GM10248 (cell line): ENCODE measurements at regions of chr6 and their contacts with region 1.

Region 1: GRCh38 chr6:152954443-152954842 is 28.4 kb downstream of the FBXO5 start:
- DNase-seq: peak; percentile 15
- CTCF ChIP-seq: peak; percentile 24

Region 2: DNA sequence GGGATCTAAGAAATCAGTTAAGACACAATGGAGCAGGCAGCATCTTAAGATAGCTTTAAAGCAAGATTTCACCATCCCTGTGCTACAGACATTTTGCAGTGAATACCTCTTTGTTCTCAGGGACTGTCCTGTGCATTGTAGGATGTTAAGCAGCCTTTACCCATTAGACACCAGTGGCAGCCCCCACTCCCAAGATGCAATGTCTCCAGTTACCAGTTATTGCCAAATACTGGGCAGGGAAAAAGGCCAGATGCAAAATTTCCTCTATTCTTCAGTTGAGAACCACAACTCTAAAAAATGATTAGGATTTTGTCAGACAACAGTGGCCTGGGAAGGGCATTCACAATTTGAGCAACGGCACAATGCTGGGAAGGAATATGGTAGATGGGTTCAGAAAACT is 22.3 kb after region 1 on chr6:
- CTCF ChIA-PET with region 1: interaction called, 13 read pairs
- POLR2A ChIA-PET with region 1: no interaction called
- DNase-seq: no peak
- CTCF ChIP-seq: no peak

Region 3: DNA sequence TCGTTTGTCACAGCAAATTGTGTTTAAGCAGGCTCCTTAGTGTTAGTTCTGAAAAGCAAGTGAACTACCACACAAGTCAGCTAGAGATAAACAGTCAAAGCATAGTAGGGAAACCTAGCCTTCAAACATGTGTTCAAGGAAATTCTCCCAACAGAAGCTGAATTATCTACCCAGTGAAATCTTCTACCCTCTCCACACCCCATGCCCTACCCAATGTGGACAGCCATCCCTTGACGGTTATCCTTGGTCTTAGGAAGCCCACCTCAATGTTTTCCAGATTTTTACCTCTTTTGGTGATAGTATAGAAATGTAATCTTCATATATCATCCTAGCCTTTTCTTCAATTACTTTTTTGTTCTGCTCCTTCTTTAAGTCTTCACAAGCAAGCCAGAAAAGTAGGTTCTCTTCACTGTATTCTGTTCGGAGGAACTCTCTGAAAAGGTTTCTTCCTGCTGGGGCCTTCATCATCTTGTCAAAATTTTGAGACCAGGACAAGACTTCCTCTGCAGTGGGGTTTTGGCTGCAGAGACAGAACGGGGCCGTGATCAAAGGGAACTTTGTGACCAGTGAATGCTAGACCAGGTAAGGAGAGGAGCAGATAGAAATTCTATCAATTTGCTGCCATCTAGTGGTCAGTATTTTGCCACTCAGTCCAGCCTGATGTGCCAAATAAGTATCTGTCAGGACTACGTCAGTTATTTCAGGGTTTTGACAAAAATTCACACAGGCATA is 69.7 kb after region 1 on chr6:
- CTCF ChIA-PET with region 1: interaction called, 45 read pairs
- POLR2A ChIA-PET with region 1: no interaction called
- DNase-seq: peak; percentile 57
- CTCF ChIP-seq: peak; percentile 87